Cardiac septum (tissue), 1 donor: ENCODE measurements at regions of chr5 and their contacts with region 1.

Region 1: DNA sequence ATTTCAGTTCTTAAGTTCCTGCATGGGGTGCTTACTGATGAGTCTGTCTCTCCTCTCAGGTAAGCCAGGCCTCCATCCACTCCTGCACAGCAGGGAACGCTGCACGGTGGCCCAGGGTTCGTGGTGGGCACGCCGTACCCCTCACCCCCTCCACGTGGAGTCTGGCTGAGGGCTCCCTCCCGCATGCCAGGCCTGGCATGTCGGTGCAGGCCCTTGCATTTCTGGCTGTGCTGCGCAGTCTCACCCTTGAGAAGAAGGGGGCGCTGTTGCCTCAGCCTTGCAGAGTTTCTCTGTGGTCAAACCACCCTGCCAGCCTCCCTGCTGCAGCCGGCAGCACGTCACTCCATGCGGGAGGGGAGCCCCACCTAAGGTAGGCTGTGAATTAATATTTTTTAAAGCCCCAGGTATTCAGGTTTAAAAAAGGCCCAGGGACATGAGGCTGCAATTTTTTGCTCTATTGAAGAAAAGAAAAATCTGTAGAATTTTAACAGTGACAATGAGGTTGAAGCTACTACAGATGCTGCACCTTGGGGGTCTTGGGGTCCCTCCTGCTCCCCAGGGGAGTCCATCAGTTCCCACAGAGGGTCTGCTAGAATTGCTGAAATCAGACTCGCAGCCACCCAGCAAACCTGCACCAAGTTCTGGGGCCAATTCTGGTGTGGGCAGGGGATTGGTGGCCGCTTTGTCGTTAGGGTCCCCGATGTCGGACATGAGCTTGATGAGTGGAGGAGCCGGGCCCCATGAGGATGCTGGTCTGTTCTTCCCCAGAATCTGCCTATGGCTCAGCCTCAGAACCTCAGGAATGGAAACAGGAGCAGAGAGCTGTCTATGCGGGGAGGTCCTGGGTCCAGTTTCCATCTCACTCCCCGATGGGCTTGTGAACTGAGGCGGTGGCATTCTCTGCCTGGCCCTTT is 52.6 kb downstream of the TENT4A start:
- DNase-seq: peak; percentile 87

Region 2: DNA sequence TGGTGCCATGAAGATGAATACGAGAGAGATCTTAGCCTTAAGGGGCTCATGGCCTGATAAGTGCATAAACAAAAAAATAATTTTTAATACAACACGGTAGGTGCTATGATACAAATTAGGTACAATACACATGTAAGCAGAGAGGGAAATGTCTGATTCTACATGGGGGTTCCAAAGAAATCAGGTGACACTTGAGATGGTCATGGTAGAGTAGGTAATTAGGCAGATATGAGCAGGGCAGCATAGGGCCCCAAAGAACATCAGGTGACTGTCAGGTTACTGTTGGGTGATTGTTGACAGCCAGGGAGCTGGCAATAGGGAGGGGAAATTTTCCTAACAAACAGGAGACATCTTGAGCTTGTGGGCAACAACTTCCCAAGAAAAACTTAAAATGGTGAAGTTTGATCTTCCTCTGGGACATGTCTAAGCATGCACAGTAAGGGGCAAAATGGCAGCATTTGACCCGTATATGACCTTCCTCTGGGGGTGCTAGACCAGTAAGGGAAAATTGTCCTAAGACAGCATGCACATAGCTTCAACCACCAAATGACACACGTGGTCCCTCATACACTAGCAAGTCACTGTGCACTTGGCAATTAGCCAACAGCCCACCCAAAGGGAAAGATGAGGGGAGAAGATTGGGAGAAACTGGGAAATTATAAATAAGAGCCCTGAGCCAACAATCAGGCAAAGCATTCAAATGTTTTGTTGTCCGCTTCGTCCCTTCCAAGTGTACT is 89.9 kb before region 1 on chr5:
- intact Hi-C with region 1: no loop called
- DNase-seq: no peak

Region 3: DNA sequence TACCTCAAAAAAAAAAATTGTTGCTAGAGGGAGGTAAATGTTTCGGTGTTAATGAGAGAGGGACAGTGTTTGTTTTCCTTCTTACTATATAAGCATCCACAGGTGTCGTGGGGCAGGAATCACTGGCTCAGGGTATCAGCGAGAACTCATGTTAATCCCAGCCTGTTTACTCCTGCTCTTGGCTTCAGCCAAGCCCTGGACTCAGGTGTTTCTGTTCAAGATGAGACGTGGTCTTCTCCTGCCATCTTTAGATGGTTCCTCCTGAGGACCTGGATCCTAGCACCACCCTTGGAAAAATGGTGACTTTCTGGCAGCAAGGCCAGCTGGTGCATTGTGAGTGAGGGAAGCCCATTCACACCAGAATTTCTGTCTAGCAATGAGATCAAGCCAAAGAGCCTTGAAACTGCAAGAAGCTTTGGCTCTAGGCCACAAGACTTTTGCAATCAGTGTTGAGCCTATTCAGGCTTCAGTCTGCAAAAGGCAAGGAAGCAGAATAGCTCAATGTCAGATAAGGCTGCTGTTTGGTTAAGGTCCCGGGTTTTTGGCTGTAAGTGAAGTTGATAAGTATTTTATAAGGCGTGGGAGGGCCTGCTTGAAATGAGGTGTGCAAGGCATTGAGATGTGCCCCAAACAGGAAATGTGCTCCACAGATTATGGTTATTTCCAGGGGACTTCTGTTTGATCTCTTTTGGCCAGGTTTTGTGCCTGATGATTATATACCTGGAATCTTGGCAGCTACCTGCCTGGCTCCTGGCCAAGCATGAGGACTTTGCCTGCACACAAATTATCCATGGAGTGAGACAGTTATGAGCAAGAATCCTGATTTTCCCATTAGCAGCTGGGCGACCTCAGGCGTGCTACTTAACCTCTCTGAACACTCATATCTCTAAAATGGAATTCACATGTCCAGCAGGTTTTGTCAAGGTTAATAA is 47.2 kb after region 1 on chr5:
- intact Hi-C with region 1: no loop called
- DNase-seq: no peak

Region 4: GRCh38 chr5:7391814-7392692 is 626.2 kb after region 1 on chr5:
- intact Hi-C with region 1: loop called (anchors 10 kb)
- DNase-seq: no peak

Region 5: GRCh38 chr5:7745882-7746610 is 980.2 kb after region 1 on chr5:
- intact Hi-C with region 1: loop called (anchors 5 kb)
- DNase-seq: no peak

Region 6: GRCh38 chr5:7856855-7857254 is 1091.0 kb after region 1 on chr5:
- intact Hi-C with region 1: loop called (anchors 5 kb)
- DNase-seq: no peak